Mammary epithelial cell (primary cell): ENCODE measurements at regions of chr2 and their contacts with region 1.

Region 1: DNA sequence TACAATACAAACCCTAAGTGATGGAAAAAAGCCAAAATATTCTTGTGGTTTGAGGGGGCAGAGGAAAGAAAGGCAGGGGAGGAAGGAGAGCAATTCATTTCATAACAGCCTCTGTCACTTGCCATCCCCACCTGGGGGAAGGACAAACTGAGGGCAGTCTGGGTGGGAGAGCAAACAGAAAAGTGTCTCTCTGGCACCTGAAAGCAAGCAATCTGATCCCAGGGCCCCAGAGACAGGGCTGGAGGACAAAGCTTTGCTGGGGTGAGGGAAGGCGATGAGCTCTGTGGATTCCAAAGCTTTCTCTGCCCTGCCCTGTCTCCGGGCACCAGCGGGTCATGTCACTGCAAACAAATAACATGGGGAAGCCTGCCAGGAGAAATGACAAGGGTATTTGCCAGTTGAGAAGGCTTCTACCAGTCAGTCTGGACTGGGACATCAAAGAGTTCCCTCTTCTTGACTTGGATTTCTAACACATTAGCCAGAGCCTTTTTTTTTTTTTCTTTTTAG is 528.1 kb upstream of the TNP1 start:
- DNase-seq: no peak
- H3K4me3 ChIP-seq: no peak overlapping the region
- H3K27ac ChIP-seq: no peak overlapping the region
- H3K4me1 ChIP-seq: peaks cover 13% of the 10 kb centered on the region
- H3K27me3 ChIP-seq: no peaks in the 10 kb centered on the region
- CTCF ChIP-seq: no peak

Region 2: GRCh38 chr2:217421834-217422233 is 33.9 kb after region 1 on chr2:
- CTCF ChIA-PET with region 1: no interaction called
- dilution Hi-C with region 1: no loop called
- in situ Hi-C with region 1: no loop called
- intact Hi-C with region 1: no loop called
- DNase-seq: no peak
- H3K4me3 ChIP-seq: no peak overlapping the region
- H3K27ac ChIP-seq: no peak overlapping the region
- H3K4me1 ChIP-seq: no peaks in the 10 kb centered on the region
- H3K27me3 ChIP-seq: no peaks in the 10 kb centered on the region
- CTCF ChIP-seq: no peak

Region 3: DNA sequence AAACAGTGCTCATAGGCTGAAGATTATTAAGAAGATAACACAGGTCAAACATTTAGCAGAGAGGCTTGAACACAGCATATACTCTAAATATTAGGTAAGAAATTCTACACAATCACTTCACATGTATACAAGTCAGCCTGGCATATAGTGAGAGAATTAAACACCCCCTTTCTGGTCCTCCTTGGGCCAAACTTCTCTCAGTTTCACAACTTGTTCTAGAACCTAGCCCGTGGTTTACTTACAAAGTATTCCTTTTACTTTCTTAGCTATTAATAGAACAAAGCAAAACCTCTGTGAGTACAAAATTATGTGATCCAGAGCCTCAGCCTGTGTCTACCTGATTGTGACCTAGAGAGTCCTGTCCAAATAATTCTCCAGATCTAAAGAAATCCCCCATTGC is 52.0 kb after region 1 on chr2:
- CTCF ChIA-PET with region 1: no interaction called
- dilution Hi-C with region 1: loop called (anchors 5 kb)
- in situ Hi-C with region 1: no loop called
- intact Hi-C with region 1: no loop called
- DNase-seq: no peak
- H3K4me3 ChIP-seq: no peak overlapping the region
- H3K27ac ChIP-seq: no peak overlapping the region
- H3K4me1 ChIP-seq: peaks cover 7% of the 10 kb centered on the region
- H3K27me3 ChIP-seq: no peaks in the 10 kb centered on the region
- CTCF ChIP-seq: no peak